Activated CD4-positive, alpha-beta memory T cell treated with anti-CD3 and anti-CD28 coated beads for 36 hours (primary cell): ENCODE measurements at regions of chr17 and their contacts with region 1.

Region 1: GRCh38 chr17:43170766-43171585 is at the start of gene NBR1:
- DNase-seq: peak; percentile 99
- H3K4me3 Mint-ChIP-seq: no peak within 1 kb of the TSS
- H3K27ac Mint-ChIP-seq: no peak within 1 kb of the TSS
- H3K4me1 Mint-ChIP-seq: peaks cover 25% of the 10 kb centered on the region
- H3K27me3 Mint-ChIP-seq: no peaks in the 10 kb centered on the region
- total RNA-seq, gene NBR1: 62.0 to 65.9 TPM

Region 2: DNA sequence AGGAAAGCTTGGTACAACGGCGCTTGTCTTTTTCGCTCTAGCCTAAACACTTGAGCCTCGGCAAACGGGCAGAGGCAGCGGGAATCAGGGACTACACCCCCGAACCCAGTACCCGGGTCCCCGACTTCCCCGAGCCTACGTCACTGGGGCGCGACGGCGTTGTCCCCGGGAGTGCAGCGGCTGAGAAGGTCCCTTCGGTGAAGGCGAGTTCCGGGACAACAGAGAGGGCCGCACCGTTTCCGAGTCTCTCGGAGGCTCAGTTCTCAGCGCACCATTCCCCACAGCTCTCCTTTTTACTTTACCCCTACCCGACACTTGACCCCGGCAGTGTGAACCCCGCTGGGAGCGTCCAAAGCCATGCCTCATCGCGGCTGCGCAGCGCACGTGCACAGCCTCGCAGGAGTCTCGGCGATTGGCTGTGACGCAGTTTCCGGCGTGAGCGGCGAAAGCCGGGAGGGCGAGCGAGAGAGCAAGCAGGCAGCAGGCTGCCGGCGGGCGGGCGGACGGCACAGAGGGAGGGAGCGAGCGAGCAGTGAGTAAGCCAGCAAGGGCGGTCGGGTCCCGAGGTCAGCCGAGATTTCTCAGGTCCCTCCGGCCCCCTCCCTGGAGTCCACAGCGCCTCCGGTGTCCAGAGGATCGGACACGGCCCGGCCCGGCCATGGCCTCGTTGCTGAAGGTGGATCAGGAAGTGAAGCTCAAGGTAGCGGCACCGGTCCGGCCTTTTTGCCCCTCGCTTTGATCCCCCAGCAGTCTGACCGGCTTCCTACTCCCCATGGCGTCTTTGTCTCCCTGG is 337.8 kb before region 1 on chr17 and contains the start of gene PSME3:
- CTCF ChIA-PET with region 1: no interaction called
- POLR2A ChIA-PET with region 1: no interaction called
- intact Hi-C with region 1: loop called (anchors 2 kb)
- DNase-seq: peak; percentile 93
- H3K4me3 Mint-ChIP-seq: peak within 1 kb of the TSS; percentile 97
- H3K27ac Mint-ChIP-seq: peak within 1 kb of the TSS; percentile 98
- H3K4me1 Mint-ChIP-seq: peaks cover 30% of the 10 kb centered on the region
- H3K27me3 Mint-ChIP-seq: no peaks in the 10 kb centered on the region
- total RNA-seq, gene PSME3: 111 to 116 TPM

Region 3: DNA sequence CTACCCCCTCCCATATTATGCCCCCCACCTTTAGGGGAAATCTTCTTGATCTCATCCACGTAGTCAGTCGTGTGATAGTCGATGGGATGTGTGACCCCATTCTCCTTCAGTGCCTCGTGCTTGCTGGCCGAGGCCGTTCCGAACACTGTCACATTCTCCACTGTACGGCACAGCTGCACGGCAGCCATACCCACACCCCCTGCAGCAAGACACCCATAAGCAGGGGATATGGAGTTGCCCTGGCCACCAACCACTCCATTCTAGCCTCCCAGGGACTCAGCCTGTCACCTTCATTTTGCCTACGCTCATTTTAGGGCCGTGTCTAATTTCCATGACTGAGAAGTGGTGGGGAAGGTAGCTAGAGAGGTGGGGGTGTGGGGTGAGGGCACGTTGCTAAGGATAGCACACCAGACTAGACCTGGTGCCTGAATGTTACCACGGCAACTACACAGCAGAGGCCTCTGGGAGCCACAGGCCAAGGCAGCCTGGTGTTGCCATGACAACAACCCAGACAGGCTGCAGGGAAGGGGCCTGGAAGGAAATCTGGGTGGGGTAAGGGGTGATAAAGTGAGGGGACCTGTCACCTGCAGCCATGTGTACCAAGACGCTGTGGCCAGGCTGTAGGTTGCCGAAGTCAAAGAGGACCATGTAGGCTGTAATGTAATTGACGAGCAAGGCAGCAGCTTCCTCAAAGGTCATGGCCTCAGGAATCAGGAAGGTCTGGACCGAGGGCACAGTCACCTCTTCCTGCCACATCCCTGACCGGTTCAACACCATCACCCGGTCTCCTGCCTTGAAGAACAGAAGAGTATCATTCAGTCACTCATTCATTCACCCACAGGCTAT is 152.7 kb before region 1 on chr17:
- CTCF ChIA-PET with region 1: no interaction called
- POLR2A ChIA-PET with region 1: no interaction called
- intact Hi-C with region 1: no loop called
- DNase-seq: peak; percentile 31
- H3K4me3 Mint-ChIP-seq: no peak overlapping the region
- H3K27ac Mint-ChIP-seq: no peak overlapping the region
- H3K4me1 Mint-ChIP-seq: peaks cover 23% of the 10 kb centered on the region
- H3K27me3 Mint-ChIP-seq: no peaks in the 10 kb centered on the region

Region 4: DNA sequence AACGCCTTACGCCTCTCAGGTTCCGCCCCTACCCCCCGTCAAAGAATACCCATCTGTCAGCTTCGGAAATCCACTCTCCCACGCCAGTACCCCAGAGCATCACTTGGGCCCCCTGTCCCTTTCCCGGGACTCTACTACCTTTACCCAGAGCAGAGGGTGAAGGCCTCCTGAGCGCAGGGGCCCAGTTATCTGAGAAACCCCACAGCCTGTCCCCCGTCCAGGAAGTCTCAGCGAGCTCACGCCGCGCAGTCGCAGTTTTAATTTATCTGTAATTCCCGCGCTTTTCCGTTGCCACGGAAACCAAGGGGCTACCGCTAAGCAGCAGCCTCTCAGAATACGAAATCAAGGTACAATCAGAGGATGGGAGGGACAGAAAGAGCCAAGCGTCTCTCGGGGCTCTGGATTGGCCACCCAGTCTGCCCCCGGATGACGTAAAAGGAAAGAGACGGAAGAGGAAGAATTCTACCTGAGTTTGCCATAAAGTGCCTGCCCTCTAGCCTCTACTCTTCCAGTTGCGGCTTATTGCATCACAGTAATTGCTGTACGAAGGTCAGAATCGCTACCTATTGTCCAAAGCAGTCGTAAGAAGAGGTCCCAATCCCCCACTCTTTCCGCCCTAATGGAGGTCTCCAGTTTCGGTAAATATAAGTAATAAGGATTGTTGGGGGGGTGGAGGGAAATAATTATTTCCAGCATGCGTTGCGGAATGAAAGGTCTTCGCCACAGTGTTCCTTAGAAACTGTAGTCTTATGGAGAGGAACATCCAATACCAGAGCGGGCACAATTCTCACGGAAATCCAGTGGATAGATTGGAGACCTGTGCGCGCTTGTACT is 45.6 kb before region 1 on chr17 and contains the start of gene BRCA1:
- CTCF ChIA-PET with region 1: interaction called, 4 read pairs
- POLR2A ChIA-PET with region 1: interaction called, 16 read pairs
- intact Hi-C with region 1: loop called (anchors 1 kb)
- DNase-seq: peak; percentile 97
- H3K4me3 Mint-ChIP-seq: peak within 1 kb of the TSS; percentile 97
- H3K27ac Mint-ChIP-seq: peak within 1 kb of the TSS; percentile 95
- H3K4me1 Mint-ChIP-seq: peaks cover 34% of the 10 kb centered on the region
- H3K27me3 Mint-ChIP-seq: no peaks in the 10 kb centered on the region
- total RNA-seq, gene BRCA1: 92.8 to 103 TPM

Region 5: GRCh38 chr17:43193251-43193650 is 22.3 kb after region 1 on chr17:
- CTCF ChIA-PET with region 1: no interaction called
- POLR2A ChIA-PET with region 1: no interaction called
- intact Hi-C with region 1: no loop called
- DNase-seq: no peak
- H3K4me3 Mint-ChIP-seq: no peak overlapping the region
- H3K27ac Mint-ChIP-seq: no peak overlapping the region
- H3K4me1 Mint-ChIP-seq: no peaks in the 10 kb centered on the region
- H3K27me3 Mint-ChIP-seq: no peaks in the 10 kb centered on the region

Region 6: DNA sequence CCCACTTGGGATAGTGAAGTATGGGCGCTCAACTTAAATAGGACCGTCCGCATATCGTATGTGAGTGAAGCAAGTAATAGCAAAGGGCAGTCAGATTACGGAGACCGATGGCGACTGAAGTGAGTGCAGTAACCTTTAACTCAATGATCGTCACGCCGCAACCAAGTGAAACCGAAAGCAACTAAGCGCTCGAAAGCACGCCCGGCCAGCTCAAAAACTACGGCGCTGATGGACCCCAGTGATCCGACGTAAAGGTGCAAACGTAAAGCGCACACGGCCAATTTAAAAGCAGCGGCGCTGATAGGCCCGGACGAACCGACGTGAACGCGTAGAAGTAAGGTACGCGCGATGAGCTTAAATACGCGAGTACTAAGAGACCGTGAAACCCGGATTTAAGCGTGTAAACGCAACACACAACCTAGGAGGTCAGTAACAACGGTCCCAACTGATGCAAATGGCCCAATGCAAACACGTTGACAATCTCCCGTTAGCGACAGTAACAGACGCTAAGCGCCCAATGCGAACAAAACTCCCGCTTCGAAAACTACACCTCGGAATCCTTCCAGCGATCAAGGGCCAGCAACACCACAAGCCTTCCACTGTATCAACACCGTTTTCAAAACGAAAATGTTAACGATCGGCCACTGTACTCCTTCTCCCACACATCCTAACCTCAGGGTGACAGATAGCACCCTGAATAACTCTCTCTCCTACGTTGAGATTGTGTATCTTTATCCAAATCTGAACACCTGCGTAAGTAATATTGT is 189.9 kb after region 1 on chr17:
- CTCF ChIA-PET with region 1: interaction called, 3 read pairs
- POLR2A ChIA-PET with region 1: interaction called, 8 read pairs
- intact Hi-C with region 1: loop called (anchors 2 kb)
- DNase-seq: peak; percentile 93
- H3K4me3 Mint-ChIP-seq: peak overlapping the region; percentile 86
- H3K27ac Mint-ChIP-seq: peak overlapping the region; percentile 99
- H3K4me1 Mint-ChIP-seq: peaks cover 29% of the 10 kb centered on the region
- H3K27me3 Mint-ChIP-seq: peaks cover 11% of the 10 kb centered on the region

Region 7: DNA sequence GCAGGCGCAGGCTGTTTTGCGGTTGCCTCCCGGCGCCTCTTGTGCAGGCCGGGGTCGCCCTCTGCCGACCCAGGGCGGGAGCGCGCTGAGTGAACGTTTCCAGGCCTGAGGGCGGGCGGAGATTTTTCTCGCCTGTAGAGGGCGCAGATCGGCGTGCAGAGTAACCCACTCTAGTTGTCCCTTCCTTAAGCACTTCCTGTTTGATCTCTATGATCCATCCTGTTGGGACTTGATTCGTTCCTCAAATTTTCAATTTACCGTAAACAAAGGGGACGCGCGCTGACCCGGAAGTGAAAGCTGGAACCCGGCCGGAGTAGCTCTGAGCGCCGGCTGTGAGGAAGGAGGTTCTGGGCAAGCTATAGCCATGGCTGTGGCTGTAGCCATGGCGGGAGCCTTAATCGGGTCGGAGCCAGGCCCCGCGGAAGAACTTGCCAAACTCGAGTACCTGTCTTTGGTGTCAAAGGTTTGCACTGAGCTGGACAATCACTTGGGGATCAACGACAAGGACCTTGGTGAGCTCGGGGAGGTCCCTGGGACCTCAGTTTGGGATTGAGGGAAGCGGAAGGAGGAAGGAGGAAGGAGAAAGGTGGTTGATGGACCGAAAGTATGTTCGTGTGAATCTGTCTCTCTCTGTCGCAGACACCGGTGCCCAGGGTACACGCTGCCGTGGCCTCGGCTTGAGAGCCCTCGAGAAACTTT is 312.8 kb after region 1 on chr17 and contains the start of gene DHX8:
- CTCF ChIA-PET with region 1: no interaction called
- POLR2A ChIA-PET with region 1: no interaction called
- intact Hi-C with region 1: loop called (anchors 2 kb)
- DNase-seq: peak; percentile 99
- H3K4me3 Mint-ChIP-seq: peak within 1 kb of the TSS; percentile 99
- H3K27ac Mint-ChIP-seq: peak within 1 kb of the TSS; percentile 95
- H3K4me1 Mint-ChIP-seq: peaks cover 18% of the 10 kb centered on the region
- H3K27me3 Mint-ChIP-seq: no peaks in the 10 kb centered on the region
- total RNA-seq, gene DHX8: 47.8 to 54.1 TPM